MCF 10A (cell line): ENCODE measurements at regions of chr1 and their contacts with region 1.

Region 1: GRCh38 chr1:53203466-53203865 is 6.8 kb downstream of the CPT2 start:
- DNase-seq: no peak
- H3K4me3 Mint-ChIP-seq: no peak overlapping the region
- H3K27ac Mint-ChIP-seq: peak overlapping the region; percentile 36
- H3K4me1 Mint-ChIP-seq: peaks cover 13% of the 10 kb centered on the region
- H3K27me3 Mint-ChIP-seq: no peaks in the 10 kb centered on the region
- CTCF ChIP-seq: no peak

Region 2: GRCh38 chr1:53134961-53135734 is 68.3 kb before region 1 on chr1:
- CTCF ChIA-PET with region 1: no interaction called
- POLR2A ChIA-PET with region 1: no interaction called
- intact Hi-C with region 1: no loop called
- DNase-seq: peak; percentile 39
- H3K4me3 Mint-ChIP-seq: no peak overlapping the region
- H3K27ac Mint-ChIP-seq: no peak overlapping the region
- H3K4me1 Mint-ChIP-seq: peaks cover 5% of the 10 kb centered on the region
- H3K27me3 Mint-ChIP-seq: no peaks in the 10 kb centered on the region
- CTCF ChIP-seq: no peak

Region 3: DNA sequence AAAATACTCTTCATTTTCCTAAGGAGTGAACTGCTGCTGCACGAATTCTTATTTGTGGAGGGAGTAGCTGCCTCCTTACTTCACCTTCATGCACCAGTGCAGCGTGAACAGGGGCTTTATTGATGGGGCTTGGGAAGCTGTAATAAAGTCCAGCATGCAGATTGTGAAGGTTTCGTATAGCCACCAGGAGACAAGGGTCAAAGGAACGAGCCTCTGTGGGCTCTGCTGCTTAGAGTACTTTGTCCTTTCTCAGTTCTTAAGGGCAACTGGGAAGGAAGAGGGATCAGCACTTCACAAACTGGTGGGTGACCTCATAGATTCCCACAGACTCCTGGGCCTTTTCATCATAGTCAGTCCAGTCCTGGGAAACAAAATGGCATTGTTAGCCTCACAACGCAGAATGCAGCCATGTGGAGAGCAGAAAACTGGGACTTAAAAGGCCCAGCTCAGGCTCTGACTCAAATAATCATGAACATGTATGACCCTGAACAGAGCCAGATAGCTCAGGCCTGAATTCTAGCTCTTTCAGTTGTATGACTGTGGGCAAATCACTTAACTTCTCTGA is 11.0 kb after region 1 on chr1:
- CTCF ChIA-PET with region 1: no interaction called
- POLR2A ChIA-PET with region 1: interaction called, 49 read pairs
- intact Hi-C with region 1: no loop called
- DNase-seq: no peak
- H3K4me3 Mint-ChIP-seq: no peak overlapping the region
- H3K27ac Mint-ChIP-seq: no peak overlapping the region
- H3K4me1 Mint-ChIP-seq: peaks cover 8% of the 10 kb centered on the region
- H3K27me3 Mint-ChIP-seq: no peaks in the 10 kb centered on the region
- CTCF ChIP-seq: no peak

Region 4: GRCh38 chr1:53220171-53220961 is 16.9 kb after region 1 on chr1 and contains the start of gene CZIB:
- CTCF ChIA-PET with region 1: no interaction called
- POLR2A ChIA-PET with region 1: interaction called, 49 read pairs
- intact Hi-C with region 1: no loop called
- DNase-seq: peak; percentile 93
- H3K4me3 Mint-ChIP-seq: peak within 1 kb of the TSS; percentile 94
- H3K27ac Mint-ChIP-seq: peak within 1 kb of the TSS; percentile 99
- H3K4me1 Mint-ChIP-seq: peaks cover 8% of the 10 kb centered on the region
- H3K27me3 Mint-ChIP-seq: no peaks in the 10 kb centered on the region
- CTCF ChIP-seq: no peak
- total RNA-seq, gene CZIB: 37.2 and 45.0 TPM in 2 replicates

Region 5: GRCh38 chr1:53376041-53376461 is 172.6 kb after region 1 on chr1:
- CTCF ChIA-PET with region 1: no interaction called
- POLR2A ChIA-PET with region 1: no interaction called
- intact Hi-C with region 1: no loop called
- DNase-seq: no peak
- H3K4me3 Mint-ChIP-seq: no peak overlapping the region
- H3K27ac Mint-ChIP-seq: no peak overlapping the region
- H3K4me1 Mint-ChIP-seq: no peaks in the 10 kb centered on the region
- H3K27me3 Mint-ChIP-seq: no peaks in the 10 kb centered on the region
- CTCF ChIP-seq: no peak